Head of caudate nucleus (tissue), 42 donors: ENCODE measurements at regions of chr14 and their contacts with region 1.

Region 1: GRCh38 chr14:34982417-34983147 is at the start of gene SRP54:
- DNase-seq: peak; percentile 95 to 99 (median 98)

Region 2: DNA sequence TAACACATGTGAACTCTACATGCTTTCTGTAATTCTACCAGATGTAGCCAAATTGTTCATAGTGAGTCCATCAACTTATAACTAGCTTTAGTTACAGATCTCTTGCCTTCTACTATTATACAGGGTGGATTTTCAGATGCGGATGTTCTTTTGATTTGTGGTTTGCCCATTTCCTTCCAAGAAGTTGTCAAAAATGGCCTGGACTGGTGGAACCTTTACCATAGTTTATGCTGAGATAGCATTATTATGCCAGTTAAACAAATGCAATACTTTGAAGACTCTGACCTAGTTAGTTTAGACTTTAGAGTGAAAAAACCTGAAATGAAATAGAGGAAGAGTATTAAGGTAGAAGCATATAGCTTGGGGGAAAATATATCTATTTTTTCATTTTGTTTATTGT is 240.7 kb before region 1 on chr14:
- intact Hi-C with region 1: no loop called
- DNase-seq: no peak

Region 3: DNA sequence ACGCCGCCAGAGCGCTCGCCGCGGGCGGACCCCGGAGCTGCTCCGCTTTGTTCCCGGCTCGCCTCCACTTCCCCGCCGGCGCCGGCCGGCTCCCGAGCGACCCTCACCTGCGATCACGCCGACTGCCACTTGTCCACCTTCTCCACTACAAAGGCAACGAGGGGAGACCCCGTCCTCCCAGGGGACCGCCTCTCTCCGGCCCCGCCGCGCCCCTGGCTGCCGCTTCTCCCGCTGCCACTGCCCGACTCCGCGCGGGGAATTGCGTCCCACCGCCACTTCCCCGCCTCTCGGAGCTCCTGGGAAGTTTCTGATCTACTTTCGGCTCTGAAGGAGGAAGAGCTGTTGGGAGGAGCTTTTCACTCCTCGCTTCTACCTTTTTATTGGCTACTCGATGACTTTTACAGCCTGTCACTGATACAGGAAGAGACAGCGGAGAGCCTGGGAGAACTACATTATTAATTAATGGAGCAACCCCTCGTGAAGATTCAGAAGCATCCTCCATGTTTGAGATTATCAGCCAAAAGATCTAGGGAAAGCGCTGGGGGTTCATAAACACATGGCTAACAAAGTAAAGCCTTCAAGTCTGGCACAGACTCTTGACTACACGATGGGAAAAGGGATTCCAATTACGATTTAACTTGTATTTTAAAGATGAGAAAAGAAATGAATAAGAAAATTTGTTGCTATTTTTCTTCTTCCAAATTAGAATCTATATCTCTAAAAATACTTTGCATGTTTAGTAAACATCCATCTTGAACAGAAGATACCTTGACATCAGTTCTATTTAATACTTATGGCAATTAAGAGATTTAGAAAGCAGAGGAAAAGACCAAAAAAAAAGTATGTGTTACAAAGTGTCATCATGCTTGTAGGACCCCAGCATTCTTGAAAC is 107.3 kb before region 1 on chr14 and contains the start of gene BAZ1A:
- intact Hi-C with region 1: loop called (anchors 2 kb)
- DNase-seq: peak in 40 of 42 donors; percentile 16 to 84 (median 66)

Region 4: DNA sequence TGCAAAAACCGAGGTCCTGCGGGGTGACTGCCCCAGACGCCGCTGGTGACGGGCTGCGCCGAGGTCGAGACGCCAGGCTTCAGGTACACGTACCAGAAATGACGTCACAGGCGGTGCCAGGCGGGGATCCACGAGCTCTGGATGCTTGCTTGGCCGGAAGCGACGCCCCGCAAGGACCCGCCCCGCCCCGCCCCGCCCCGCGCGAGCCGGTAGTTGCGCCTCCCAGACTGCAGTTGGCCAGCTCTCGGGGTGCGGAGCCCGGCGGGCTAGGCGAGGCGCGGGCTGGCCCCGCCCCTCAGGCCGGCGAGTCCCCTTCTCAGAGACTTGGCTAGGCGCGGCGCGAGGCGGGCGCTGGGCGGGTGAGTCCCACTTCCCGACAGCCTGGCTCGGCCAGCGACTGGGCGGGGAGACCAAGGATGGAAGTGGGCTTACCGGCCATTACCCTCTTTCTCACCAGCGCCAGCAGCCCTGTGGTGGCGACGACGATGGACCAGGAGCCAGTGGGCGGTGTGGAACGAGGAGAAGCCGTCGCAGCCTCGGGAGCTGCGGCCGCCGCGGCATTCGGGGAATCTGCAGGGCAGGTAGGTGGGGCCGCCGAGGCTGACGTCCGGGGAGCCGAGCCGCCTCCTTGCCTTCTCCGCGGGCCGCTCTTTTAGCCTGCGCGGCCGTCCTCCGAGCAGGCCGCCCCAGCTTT is 63.6 kb after region 1 on chr14 and contains the start of gene FAM177A1:
- intact Hi-C with region 1: loop called (anchors 2 kb)
- DNase-seq: peak; percentile 96 to 99 (median 98)

Region 5: DNA sequence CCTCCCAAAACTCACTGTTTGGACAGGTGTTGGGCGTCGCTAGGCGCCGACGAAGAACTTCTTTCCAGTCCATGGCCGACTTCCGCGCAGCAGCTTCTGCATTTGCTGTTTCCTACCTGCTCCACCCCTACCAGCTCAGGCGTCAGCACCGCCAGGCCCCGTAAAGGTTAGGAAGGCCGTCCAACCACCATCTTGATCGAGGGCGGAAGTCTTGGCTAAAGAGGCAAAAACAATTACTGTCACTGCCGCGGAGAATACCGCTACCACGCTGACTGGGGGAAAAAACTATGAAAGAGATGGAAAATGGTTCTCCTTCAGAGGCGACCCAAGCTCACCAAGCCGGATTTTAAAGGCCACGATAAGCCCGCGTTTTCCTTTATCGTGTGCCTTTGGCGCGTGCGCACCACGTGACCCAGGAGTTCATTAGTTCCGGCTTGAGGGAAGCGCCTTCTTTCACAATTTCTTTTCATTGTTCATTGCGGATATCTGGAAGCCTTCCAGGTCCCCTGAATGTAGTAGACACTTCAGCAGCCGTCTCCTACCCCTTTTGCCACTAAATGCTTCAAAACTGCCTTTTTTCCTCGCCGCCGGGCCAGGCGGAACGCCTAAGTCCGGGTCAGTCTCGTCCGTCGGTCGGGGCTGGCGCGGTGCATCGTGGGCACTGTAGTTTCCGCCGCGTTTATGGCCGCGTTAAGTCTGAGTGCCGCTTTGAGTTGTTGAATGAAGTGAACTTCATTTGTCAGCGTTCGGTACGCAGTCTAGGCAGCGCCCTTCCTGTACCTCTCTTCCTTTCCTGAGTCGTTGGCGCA is 139.5 kb after region 1 on chr14 and contains the starts of genes PPP2R3C and PRORP:
- intact Hi-C with region 1: loop called (anchors 10 kb)
- DNase-seq: peak; percentile 87 to 97 (median 92)

Region 6: DNA sequence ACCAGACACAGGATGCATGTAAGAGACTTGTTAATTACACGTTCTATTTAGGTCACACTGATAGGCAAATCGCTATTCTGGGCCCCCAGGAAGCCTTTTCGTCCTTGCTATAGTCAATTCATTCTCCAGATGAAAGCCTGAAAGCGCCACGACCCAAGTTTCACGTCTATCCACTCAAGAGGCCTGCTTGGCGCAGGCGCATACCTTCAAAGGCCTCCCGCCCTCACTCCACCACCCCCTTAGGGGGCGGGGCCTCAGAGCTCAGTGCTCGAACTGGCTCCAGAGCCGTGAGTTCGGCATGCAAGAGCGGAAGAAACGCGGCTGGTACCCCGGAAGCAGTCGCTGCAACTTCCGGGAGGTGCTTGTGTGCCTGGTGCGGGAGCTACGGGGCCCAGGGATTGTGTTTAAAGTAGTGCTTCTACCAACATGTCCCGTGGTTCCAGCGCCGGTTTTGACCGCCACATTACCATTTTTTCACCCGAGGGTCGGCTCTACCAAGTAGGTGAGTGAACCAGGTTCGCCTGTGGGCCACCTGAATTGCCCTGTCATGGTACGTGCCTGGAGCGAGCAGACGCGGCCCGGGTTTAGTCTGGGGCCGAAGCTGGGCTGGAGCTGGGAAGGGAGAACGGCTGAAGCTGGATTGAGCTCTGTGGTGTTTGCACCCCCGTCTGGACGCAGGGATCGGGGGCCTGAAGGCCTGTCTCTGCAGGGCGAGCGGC is 309.6 kb after region 1 on chr14 and contains the start of gene PSMA6:
- intact Hi-C with region 1: loop called (anchors 5 kb)
- DNase-seq: peak; percentile 98 to 100 (median 100)

Region 7: DNA sequence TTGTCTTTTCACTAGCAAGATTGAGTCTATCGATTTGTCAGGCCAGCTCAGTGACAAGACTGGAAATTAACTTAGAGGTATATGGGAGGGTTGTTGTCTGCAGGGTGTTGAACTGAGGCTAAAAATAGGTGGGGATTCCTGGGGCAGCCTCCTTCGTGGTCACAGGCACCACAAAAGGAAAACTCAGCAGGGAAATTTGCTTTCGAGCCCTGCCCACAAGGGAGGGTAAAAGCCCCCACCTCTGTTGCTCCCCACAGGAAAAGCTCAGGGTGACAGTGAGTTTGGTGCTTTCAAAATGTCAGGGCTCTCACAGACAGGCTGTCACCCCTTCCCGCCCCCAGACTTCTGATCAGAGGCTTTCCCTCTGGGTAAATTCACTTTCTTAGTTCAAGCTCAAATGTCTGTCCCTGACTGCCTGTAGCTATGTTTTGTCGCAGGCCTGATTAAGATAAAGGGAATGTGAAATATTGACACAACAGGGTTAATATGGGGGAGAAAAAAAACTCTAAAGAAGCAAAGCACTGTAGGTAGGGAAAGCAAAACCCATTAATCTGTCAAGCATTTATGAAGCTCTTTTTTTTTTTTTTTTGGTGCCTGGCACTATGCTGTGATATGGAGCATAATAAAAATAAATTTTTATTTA is 433.6 kb after region 1 on chr14:
- intact Hi-C with region 1: loop called (anchors 5 kb)
- DNase-seq: peak in 3 of 42 donors; percentile 36 to 53 (median 37)